ENCODE measurements at regions of chr4 and their contacts with region 1.

Region 1: GRCh38 chr4:3442959-3443749 is 1.4 kb downstream of the HGFAC start:
- ATAC-seq: peak; percentile 49 to 87 (median 70)
- H3K4me3 ChIP-seq: no peak overlapping the region
- H3K27ac ChIP-seq: no peak overlapping the region
- H3K4me1 ChIP-seq: no peaks in the 10 kb centered on the region

Region 2: GRCh38 chr4:3201718-3202702 is 241.1 kb before region 1 on chr4:
- in situ Hi-C with region 1: no loop called
- ATAC-seq: peak in 7 of 8 experiments; percentile 29 to 75 (median 48)
- H3K4me3 ChIP-seq: no peak overlapping the region
- H3K27ac ChIP-seq: no peak overlapping the region
- H3K4me1 ChIP-seq: no peaks in the 10 kb centered on the region

Region 3: GRCh38 chr4:3346146-3346545 is 97.0 kb before region 1 on chr4:
- in situ Hi-C with region 1: loop called in 2 of 9 experiments (anchors 10 to 25 kb)
- ATAC-seq: peak; percentile 69 to 98 (median 78)
- H3K4me3 ChIP-seq: no peak overlapping the region
- H3K27ac ChIP-seq: no peak overlapping the region
- H3K4me1 ChIP-seq: peaks cover 14 to 24% of the 10 kb centered on the region in 2 donors

Region 4: DNA sequence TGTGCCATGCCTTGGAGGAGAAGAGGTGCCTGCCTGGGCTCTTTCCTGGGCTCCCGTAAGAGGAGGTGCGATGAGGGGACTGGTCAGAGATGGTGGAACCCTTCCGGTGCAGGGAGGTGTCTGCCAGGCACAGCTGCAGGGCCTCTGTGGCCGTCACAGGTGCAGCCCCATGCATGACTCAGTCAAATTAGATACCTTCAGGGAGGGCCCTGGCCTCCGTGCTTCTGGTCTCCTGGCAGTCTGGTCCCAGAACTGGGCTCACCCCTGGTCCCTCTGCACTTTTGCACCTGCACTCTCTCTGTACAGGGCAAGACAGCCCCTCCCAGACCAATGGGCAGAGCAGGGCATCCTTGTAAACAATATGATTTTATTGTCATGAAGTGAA is 138.9 kb after region 1 on chr4:
- in situ Hi-C with region 1: no loop called
- ATAC-seq: no peak
- H3K4me3 ChIP-seq: no peak overlapping the region
- H3K27ac ChIP-seq: no peak overlapping the region
- H3K4me1 ChIP-seq: peaks cover 4 to 5% of the 10 kb centered on the region in 2 donors

Region 5: GRCh38 chr4:3637326-3638016 is 194.3 kb after region 1 on chr4:
- in situ Hi-C with region 1: no loop called
- ATAC-seq: no peak
- H3K4me3 ChIP-seq: no peak overlapping the region
- H3K27ac ChIP-seq: no peak overlapping the region
- H3K4me1 ChIP-seq: peaks cover 9 to 23% of the 10 kb centered on the region in 2 donors

Region 6: GRCh38 chr4:3765271-3766040 is 322.3 kb after region 1 on chr4:
- in situ Hi-C with region 1: no loop called
- ATAC-seq: peak; percentile 73 to 87 (median 80)
- H3K4me3 ChIP-seq: peak overlapping the region; percentile 41 to 73 (median 46)
- H3K27ac ChIP-seq: peak overlapping the region in 1 of 2 donors; percentile 80
- H3K4me1 ChIP-seq: peaks cover 0 to 15% of the 10 kb centered on the region in 2 donors